Left ventricle myocardium superior (tissue), 1 donor: ENCODE measurements at regions of chr4 and their contacts with region 1.

Region 1: DNA sequence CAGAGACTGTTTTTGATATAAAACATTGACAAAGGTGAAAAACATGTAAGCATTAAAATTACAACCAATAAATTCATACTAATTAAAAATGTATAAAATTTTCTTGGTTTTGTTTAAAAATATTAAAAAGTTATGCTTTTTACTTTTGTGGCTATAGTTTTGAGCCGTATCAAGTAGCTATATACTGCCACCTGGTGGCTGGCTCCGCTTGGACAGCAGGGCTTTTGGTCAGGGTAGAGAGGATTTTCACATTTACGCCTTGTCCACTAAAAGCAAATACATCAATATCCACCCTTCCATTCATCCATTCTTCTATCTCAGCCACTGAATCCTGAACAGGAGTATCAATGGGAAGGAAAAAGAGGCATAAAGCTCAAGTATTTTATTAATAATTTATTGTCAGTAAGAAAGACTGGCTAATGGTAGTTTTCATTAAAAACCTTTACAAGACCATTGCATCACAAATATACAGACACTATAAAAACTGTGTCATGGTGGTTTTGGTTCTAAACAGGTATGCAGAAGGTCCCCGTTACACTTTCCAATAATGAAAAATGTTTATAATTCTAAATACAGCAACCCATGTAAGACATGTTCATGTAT is 32.1 kb upstream of the MTNR1A start:
- DNase-seq: peak; percentile 81
- ATAC-seq: peak; percentile 65

Region 2: GRCh38 chr4:186104114-186104889 is 483.2 kb before region 1 on chr4 and contains the start of gene FAM149A:
- intact Hi-C with region 1: no loop called
- DNase-seq: peak; percentile 52
- ATAC-seq: peak; percentile 78
- total RNA-seq, gene FAM149A: 12.8 TPM

Region 3: DNA sequence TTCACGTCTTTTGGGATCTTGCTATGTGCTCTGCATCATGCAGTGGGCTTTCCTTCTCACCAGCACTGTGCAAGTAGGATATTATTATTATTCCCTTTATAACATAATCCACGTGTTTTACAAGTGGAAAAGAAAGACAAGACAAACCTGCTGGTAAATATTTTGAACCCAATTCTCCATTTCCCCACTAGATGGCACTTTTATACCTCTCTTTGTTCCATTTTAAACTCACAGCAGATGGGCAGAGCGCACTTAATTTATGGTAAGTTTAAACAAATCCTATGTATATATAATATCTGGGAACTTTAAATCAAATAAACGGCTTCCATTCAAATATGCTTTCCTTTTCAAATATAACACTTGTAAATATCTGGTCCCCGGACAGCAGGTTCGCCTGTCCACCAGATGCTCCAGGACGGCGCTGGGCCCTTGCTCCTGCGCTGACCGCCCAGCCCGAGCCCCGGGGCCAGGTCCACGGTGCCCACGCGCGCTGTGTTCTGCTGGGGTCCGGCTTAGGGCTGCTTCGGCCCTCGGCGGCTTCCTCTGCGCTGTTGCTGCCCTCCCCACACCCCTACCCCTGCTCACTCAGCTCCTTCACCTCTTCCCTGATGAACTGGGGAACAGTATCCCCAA is 290.4 kb before region 1 on chr4:
- intact Hi-C with region 1: loop called (anchors 5 kb)
- DNase-seq: no peak
- ATAC-seq: no peak

Region 4: DNA sequence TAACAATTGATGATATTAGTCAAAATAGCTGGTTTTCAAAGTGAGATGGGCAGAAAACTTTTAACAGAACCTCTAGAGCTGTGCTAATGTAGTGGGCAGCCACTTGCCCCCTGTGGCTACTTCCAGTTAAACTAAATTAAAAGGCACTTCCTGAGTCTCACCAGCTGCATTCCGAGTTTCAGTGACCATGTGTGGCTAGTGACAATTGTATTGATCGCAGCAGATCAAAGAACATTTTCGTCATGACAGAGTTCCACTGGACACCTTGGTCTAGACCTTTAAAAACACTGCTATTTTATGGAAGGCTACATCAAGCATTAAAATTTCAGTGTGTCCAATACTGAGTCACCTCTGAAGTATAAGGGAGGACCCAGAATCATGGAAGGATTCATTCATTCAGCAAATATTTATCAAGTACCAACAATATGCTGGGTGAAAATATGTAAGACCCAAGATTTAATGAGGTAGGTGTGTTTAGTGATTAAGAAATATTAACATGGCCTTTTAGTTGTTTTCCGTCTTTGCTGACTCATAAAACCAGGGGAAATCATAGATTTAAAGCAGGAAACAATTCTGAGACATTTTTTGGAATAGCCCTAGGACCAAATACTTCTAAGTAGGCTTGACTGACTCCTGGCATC is 141.2 kb after region 1 on chr4:
- intact Hi-C with region 1: no loop called
- DNase-seq: no peak
- ATAC-seq: no peak